HepG2 (cell line): ENCODE measurements at regions of chr7 and their contacts with region 1.

Region 1: DNA sequence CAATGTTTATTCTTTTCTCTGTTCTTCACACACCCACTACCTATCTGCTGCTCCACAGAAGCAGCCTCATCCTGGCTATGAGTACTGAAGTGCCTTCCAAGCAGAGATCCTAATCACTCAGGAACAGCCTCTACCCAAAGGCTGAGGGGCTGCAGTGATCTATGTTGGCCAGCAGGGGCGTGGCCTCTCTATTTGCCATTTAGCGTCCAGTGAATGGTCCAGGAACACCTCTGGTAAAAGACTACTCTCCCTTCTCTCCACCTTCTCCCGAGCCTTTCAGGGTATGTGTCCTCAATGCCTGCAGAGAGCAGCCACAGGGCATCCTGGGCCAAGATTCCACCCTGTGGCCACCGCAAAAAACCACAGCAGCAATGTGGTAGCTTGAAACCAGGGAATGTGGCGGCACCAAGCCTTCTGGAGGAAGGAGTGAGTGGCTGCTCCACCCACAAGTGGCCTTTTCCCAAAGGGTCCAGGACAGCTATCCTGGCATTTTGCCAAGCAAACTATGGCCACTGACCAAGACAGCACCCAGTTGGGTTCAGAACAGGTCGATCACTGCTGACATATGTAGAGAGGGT is 70.9 kb downstream of the SYPL1 start:
- DNase-seq: peak; percentile 50
- ATAC-seq: peak; percentile 79
- H3K4me3 ChIP-seq: no peak overlapping the region
- H3K27ac ChIP-seq: no peak overlapping the region
- H3K4me1 ChIP-seq: peaks cover 20% of the 10 kb centered on the region
- H3K27me3 ChIP-seq: peaks cover 0 to 12% of the 10 kb centered on the region in 2 experiments; a peak in 1 of 5 replicates
- CTCF ChIP-seq: peak; percentile 70
- EP300 ChIP-seq: no peak
- POLR2A ChIP-seq: no peak
- RAD21 ChIP-seq: no peak

Region 2: DNA sequence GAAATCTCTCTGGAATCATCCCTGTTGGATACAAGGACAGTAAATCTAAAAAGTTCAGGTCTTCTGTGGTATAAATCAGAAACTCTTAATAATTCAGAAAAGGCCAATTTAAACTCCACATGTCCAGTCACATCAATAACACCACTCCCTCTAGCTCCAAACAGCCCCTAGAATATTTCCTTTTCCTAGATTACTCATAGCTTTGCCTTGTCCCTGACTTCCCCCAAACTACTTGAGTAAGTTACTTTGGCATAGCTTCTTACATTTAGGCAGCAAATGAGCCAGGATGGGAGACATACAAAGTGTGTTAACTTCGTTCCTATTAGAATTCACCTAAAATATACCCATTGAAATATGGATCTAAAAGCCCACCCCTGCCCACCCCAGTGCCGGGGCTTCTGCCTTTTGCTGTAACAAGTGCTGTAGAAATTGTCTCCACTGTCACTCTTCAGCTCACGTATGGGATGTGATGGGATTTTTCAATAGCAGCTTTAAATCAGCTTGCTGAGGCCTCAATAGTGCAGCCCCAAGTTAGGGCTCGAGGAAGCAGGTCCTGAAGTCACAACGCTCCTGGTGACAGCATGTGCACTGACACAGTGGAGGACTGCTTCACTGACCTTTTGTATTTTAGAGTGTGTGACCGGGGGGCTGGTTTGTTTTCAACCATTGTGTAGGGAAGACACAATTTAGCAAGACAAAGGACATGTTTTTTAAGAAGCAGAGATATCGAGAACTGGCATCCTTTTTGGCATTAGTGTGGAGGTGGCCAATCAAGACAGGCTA is 1245.4 kb before region 1 on chr7:
- CTCF ChIA-PET with region 1: no interaction called
- POLR2A ChIA-PET with region 1: no interaction called
- in situ Hi-C with region 1: no loop called
- intact Hi-C with region 1: no loop called
- DNase-seq: no peak
- ATAC-seq: no peak
- H3K4me3 ChIP-seq: no peak overlapping the region
- H3K27ac ChIP-seq: no peak overlapping the region
- H3K4me1 ChIP-seq: no peaks in the 10 kb centered on the region
- H3K27me3 ChIP-seq: 0 out of 5 replicates have a peak, but pooled peaks cover 0 to 4% of the 10 kb centered on the region in 2 experiments
- CTCF ChIP-seq: no peak
- EP300 ChIP-seq: no peak
- POLR2A ChIP-seq: no peak
- RAD21 ChIP-seq: no peak

Region 3: GRCh38 chr7:105652359-105652993 is 388.8 kb before region 1 on chr7:
- CTCF ChIA-PET with region 1: interaction called, 24 read pairs
- POLR2A ChIA-PET with region 1: no interaction called
- in situ Hi-C with region 1: loop called (anchors 5 kb)
- intact Hi-C with region 1: loop called (anchors 2 kb)
- DNase-seq: peak; percentile 62
- ATAC-seq: peak; percentile 96
- H3K4me3 ChIP-seq: no peak overlapping the region
- H3K27ac ChIP-seq: no peak overlapping the region
- H3K4me1 ChIP-seq: peaks cover 46% of the 10 kb centered on the region
- H3K27me3 ChIP-seq: no peaks in the 10 kb centered on the region
- CTCF ChIP-seq: peak; percentile 94
- EP300 ChIP-seq: no peak
- POLR2A ChIP-seq: no peak
- RAD21 ChIP-seq: peak; percentile 90

Region 4: DNA sequence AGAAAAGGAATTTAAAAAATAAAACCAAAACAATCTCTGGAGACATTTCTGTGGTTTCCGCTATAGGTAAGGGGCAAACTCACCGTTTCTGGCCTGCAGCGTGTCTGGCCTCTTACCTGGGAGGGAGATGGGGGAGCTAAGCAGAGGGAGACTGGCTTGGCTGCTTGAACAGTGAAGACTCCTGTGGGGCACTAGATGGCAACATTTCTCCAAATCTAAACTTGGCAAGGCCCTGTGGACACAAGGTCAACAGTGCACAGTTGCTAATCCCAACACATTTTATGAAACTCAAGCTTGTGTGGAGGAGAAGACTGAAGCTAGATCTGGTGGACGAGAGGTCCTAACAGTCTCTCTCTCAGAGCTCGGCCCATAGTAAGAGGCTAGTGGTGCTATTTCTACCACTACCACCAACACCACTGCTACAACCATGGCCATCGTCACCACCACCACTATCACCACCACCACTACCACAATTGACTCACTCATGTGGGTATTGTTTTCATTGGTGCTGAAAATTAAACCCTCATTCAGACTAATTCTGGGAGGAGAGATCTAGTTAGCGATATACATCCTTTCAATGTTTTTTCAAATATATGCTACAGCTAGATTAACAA is 106.5 kb before region 1 on chr7:
- CTCF ChIA-PET with region 1: interaction called, 5 read pairs
- POLR2A ChIA-PET with region 1: no interaction called
- in situ Hi-C with region 1: no loop called
- intact Hi-C with region 1: loop called (anchors 1 kb)
- DNase-seq: peak; percentile 64
- ATAC-seq: peak; percentile 99
- H3K4me3 ChIP-seq: no peak overlapping the region
- H3K27ac ChIP-seq: no peak overlapping the region
- H3K4me1 ChIP-seq: peaks cover 11% of the 10 kb centered on the region
- H3K27me3 ChIP-seq: no peaks in the 10 kb centered on the region
- CTCF ChIP-seq: peak; percentile 72
- EP300 ChIP-seq: no peak
- POLR2A ChIP-seq: no peak
- RAD21 ChIP-seq: peak; percentile 75

Region 5: DNA sequence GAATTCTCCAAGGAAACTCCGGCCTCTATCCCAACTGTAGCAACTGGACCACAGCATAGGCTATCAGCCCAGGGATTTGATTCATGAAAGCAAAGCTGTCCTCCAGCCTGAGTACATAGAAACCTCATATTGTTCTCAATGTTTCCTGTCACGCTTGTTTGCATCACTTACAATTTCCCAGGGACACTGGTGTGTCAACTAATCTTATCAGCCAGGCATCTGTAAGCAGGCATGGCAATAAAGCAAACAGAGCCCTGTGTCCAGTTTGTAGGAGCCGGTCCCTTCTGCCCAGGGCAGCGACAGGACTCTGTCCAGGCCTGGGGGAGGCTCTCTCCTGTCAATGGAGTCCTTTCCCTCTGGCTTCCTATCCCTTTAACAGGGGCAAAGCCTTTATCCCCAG is 101.1 kb before region 1 on chr7:
- CTCF ChIA-PET with region 1: interaction called, 5 read pairs
- POLR2A ChIA-PET with region 1: no interaction called
- in situ Hi-C with region 1: loop called (anchors 5 kb)
- intact Hi-C with region 1: no loop called
- DNase-seq: peak; percentile 81
- ATAC-seq: peak; percentile 93
- H3K4me3 ChIP-seq: no peak overlapping the region
- H3K27ac ChIP-seq: no peak overlapping the region
- H3K4me1 ChIP-seq: peaks cover 20% of the 10 kb centered on the region
- H3K27me3 ChIP-seq: no peaks in the 10 kb centered on the region
- CTCF ChIP-seq: no peak
- EP300 ChIP-seq: no peak
- POLR2A ChIP-seq: no peak
- RAD21 ChIP-seq: no peak

Region 6: DNA sequence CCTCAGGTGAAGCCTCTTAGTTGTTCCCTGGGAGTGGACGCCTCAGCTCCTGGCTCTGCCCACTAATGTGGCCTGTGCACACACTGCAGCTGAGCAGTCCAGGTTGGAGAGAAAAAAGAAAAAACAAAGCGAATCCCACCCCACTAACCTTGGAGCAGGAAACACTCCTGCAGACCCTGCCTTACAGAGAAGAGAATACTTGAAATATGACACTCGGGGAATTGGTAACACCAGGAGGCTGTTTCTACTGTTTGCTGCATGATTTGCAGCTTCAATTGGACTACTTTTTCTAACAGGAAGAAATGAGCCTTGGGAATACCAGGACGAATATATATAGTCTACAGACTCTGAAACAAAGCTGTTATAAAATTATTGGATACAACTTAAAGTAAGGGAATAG is 56.0 kb before region 1 on chr7:
- CTCF ChIA-PET with region 1: no interaction called
- POLR2A ChIA-PET with region 1: no interaction called
- in situ Hi-C with region 1: no loop called
- intact Hi-C with region 1: no loop called
- DNase-seq: no peak
- ATAC-seq: no peak
- H3K4me3 ChIP-seq: no peak overlapping the region
- H3K27ac ChIP-seq: no peak overlapping the region
- H3K4me1 ChIP-seq: peaks cover 5% of the 10 kb centered on the region; the same call in 1 of the 2 replicates
- H3K27me3 ChIP-seq: no peaks in the 10 kb centered on the region
- CTCF ChIP-seq: no peak
- EP300 ChIP-seq: no peak
- POLR2A ChIP-seq: no peak
- RAD21 ChIP-seq: no peak